GM10248 (cell line): ENCODE measurements at regions of chr20 and their contacts with region 1.

Region 1: GRCh38 chr20:54207743-54208547 is at the start of gene PFDN4:
- DNase-seq: peak; percentile 93
- CTCF ChIP-seq: peak; percentile 95

Region 2: GRCh38 chr20:53949319-53949889 is 258.5 kb before region 1 on chr20:
- CTCF ChIA-PET with region 1: no interaction called
- POLR2A ChIA-PET with region 1: no interaction called
- DNase-seq: peak; percentile 51
- CTCF ChIP-seq: no peak

Region 3: GRCh38 chr20:54093423-54094267 is 114.3 kb before region 1 on chr20:
- CTCF ChIA-PET with region 1: interaction called, 10 read pairs
- POLR2A ChIA-PET with region 1: no interaction called
- DNase-seq: no peak
- CTCF ChIP-seq: no peak

Region 4: DNA sequence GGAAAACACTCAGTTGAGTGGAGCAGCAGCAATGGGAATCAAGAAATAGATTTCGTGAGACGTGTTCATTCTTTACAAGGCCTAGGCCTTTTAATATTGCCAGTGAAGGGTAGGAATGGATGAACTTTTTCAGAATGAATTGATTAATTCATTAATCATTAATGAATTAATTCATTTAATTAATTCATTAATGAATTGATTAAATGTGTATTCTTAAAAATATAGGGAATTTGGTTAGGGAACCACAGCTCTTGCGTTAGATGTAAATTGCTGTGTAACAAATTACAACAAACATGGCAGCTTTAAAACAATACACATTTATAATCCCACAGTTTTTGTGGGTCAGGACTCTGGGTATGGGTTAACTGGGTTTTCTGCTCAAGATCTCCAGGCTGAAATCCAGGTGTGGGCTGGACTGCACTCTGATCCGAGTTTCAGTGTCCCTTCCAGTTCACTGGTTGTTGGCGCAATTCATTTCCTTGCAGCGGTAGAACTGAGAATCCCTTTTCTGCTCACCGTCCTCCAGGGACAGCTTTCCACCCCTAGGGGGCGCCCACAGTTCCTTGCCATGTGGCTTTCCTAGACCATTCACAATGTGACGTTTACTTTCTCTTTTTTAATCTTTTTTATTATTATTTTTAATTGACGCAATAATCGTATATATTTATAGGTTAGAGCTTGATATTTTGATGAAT is 104.7 kb before region 1 on chr20:
- CTCF ChIA-PET with region 1: interaction called, 136 read pairs
- POLR2A ChIA-PET with region 1: no interaction called
- DNase-seq: peak; percentile 69
- CTCF ChIP-seq: peak; percentile 80

Region 5: GRCh38 chr20:54219751-54220426 is 11.9 kb after region 1 on chr20:
- CTCF ChIA-PET with region 1: interaction called, 26 read pairs
- POLR2A ChIA-PET with region 1: no interaction called
- DNase-seq: no peak
- CTCF ChIP-seq: peak; percentile 25

Region 6: DNA sequence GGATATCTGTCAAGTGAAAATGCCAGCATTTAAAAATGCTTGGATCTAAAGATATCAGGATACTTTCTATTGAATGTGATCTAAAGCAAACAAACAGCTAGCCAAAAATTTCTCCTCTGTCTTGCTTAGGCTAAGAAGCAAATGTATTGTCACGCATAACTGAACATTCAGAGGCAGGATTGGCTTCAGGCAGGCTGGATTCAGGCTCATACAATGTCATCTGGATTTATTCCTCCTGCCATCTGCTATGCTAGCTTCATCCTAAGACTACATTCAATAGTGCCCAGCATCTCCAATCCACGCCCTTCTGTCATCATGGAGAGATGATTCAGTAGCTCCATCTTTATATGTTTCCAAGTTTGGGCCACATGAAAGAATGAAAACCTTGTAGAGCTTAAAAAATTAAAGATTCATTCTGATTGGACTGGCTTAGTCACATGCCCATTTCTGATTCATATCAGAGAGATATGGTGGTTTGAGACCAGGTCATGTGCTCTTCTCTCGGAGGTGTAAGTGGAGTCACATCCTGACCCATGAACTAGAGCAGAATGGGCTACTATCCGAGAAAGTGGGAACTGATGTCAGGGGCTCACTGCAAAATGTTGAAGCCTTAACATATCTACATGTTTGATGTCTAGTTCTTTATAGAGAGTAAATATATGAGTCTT is 27.2 kb after region 1 on chr20:
- CTCF ChIA-PET with region 1: no interaction called
- POLR2A ChIA-PET with region 1: no interaction called
- DNase-seq: no peak
- CTCF ChIP-seq: no peak

Region 7: DNA sequence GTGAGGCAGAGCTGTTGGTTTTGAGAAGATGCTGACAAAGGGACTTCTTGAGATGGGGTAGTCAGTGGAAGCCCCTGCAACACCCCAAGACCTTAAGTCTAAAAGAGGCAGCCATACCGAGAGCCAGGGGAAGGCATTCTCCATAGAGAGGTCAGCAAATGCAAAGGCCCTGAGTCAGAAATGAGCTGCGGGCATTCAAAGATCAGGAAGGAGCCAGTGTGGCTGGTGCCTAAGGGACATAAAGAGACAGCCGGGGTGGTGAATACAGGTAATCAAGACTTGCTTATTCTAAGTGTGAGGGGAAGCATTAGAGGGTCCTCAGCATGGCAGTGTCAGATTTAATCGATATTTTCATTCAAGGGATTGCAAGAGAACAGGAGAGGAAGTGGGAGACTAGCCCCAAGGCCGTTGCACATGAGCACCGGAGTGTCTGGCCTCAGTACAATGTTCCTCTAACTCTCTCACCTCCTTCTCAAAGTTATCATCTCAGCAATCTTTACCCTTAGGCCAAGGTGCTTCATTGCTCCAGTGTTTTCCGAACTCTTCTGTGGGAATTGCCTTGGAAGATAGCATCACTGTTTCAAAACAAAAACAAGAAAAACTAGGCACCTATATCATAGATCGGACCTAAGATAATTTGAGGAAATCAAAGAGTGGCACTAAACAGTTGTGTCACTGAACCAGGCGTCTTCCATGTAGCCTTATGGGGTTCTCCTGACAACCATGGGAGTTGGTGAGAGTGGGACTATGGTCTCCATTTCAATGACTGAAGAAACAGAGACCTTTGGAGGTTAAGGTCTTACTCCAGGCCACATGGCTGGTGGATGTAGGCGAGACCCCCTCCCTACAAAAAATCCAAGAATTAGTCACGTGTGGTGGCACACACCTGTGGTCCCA is 440.7 kb after region 1 on chr20:
- CTCF ChIA-PET with region 1: interaction called, 12 read pairs
- POLR2A ChIA-PET with region 1: interaction called, 3 read pairs
- DNase-seq: no peak
- CTCF ChIP-seq: no peak

Region 8: DNA sequence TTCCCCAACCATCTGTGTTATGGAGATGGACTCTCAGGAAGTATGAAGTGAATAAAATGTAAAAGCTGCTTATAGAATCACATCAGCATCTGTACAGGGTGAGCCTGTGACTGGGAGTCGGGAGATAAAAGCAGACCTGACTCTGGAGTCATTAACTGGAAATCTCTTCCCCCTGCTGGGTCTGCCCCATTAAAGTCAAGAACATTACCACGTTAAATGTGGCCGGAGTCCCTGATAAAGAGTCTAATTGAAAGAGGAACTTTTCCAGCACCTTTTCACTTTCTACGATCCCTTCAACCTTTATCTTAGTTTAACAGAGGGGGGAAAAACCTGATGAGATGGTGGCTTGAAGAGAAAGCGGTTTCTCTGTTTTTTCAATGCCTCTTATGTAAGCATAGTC is 636.0 kb after region 1 on chr20:
- CTCF ChIA-PET with region 1: no interaction called
- POLR2A ChIA-PET with region 1: no interaction called
- DNase-seq: no peak
- CTCF ChIP-seq: no peak